Activated B cell treated with CpG ODN at 0.5 μM for 24 hours (primary cell): ENCODE measurements at regions of chr1 and their contacts with region 1.

Region 1: GRCh38 chr1:24841593-24841992 is 88.5 kb downstream of the RUNX3 start:
- DNase-seq: no peak
- ATAC-seq: no peak
- H3K4me3 Mint-ChIP-seq: no peak overlapping the region
- H3K27ac Mint-ChIP-seq: no peak overlapping the region
- H3K4me1 Mint-ChIP-seq: peaks cover 2% of the 10 kb centered on the region
- H3K27me3 Mint-ChIP-seq: no peaks in the 10 kb centered on the region
- CTCF ChIP-seq: no peak

Region 2: GRCh38 chr1:24385160-24385940 is 456.2 kb before region 1 on chr1:
- CTCF ChIA-PET with region 1: no interaction called
- POLR2A ChIA-PET with region 1: interaction called, 11 read pairs
- intact Hi-C with region 1: no loop called
- DNase-seq: no peak
- ATAC-seq: peak; percentile 43
- H3K4me3 Mint-ChIP-seq: peak overlapping the region; percentile 29
- H3K27ac Mint-ChIP-seq: peak overlapping the region; percentile 69
- H3K4me1 Mint-ChIP-seq: peaks cover 32% of the 10 kb centered on the region
- H3K27me3 Mint-ChIP-seq: no peaks in the 10 kb centered on the region
- CTCF ChIP-seq: no peak

Region 3: DNA sequence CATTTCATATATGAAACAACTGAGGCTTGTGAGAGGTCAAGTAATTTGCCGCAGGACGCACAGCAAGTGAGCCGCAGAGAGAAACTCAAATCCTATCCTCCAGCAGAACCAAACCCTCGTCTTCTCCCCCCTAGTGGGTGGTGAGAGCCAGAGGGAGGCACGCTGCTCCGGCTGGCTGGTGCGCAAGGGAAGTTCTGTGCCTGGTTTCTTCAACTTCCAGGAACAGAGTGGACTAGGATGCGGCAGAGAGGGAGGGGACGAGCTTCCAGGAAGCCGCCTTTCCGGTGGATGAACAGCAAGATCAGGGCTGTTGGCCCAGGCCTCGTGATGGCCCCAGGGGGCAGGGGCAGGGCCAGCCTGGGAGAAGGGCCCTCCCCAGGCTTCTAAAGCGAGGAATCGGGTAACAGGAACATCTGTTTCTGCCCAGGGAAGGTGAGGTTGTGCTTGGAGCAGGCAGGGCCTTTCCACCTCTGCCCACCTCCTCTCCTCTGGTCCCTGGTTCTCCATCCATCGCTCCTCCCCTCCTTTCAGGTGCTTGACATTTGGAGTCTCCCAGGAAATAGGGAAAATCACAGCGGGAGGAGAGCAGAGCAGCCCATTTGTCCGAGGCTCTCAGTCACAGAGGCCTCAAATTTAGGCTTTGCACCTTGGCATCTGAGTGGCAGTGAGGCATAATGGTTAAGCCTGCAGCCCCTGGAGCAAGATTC is 1253.2 kb after region 1 on chr1:
- CTCF ChIA-PET with region 1: no interaction called
- POLR2A ChIA-PET with region 1: no interaction called
- intact Hi-C with region 1: no loop called
- DNase-seq: no peak
- ATAC-seq: no peak
- H3K4me3 Mint-ChIP-seq: no peak overlapping the region
- H3K27ac Mint-ChIP-seq: no peak overlapping the region
- H3K4me1 Mint-ChIP-seq: no peaks in the 10 kb centered on the region
- H3K27me3 Mint-ChIP-seq: peaks cover 22% of the 10 kb centered on the region
- CTCF ChIP-seq: no peak